BJ (cell line): ENCODE measurements at regions of chr1 and their contacts with region 1.

Region 1: DNA sequence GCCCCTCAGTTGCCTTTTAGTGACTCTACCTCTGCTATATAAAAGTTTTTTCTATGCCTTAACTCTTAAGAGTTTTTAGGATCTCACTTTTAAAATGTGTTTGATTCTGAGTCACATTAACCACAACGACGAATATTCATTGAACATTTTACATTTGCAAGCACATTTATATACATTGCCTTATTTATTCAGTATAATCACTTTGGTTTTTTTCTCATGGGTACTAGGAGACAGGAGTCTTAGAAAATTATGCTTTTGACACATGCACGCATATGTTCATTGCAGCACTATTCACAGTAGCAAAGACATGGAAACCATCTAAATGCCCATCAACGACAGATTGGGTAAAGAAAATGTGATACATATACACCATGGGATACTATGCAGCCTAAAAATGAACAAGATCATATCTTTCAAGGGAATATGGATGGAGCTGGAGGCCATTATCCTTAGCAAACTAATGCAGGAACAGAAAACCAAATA is 236.9 kb upstream of the SPAG17 start:
- DNase-seq: no peak
- H3K4me3 ChIP-seq: no peak overlapping the region
- H3K27me3 ChIP-seq: no peaks in the 10 kb centered on the region
- CTCF ChIP-seq: no peak

Region 2: GRCh38 chr1:118302145-118302544 is 119.8 kb before region 1 on chr1:
- CTCF ChIA-PET with region 1: no interaction called
- POLR2A ChIA-PET with region 1: interaction called, 12 read pairs
- DNase-seq: no peak
- H3K4me3 ChIP-seq: no peak overlapping the region
- H3K27me3 ChIP-seq: no peaks in the 10 kb centered on the region
- CTCF ChIP-seq: no peak

Region 3: DNA sequence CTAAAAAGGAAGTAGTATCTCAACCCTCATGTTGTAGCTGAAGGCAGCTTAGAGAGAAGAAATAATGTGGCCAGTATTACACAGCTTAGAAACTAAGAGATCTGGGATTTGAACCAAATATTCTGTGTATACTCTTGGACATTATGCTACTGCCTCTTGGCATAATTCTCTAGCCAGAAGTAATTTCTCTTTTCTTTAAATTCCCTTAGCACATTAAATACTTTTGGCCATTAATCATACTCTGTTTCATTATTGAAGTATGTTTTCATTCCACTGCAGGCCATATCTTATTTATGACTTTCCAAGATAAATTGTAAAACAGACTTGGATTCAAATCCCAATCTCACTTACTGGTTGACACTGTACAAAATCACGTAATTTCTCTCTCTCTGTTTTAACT is 55.6 kb before region 1 on chr1:
- CTCF ChIA-PET with region 1: no interaction called
- POLR2A ChIA-PET with region 1: no interaction called
- DNase-seq: peak; percentile 45
- H3K4me3 ChIP-seq: no peak overlapping the region
- H3K27me3 ChIP-seq: no peaks in the 10 kb centered on the region
- CTCF ChIP-seq: no peak